RWPE1 (cell line): ENCODE measurements at regions of chr1 and their contacts with region 1.

Region 1: GRCh38 chr1:172719694-172720138 is 60.8 kb downstream of the FASLG start:
- DNase-seq: peak; percentile 42
- H3K27ac ChIP-seq: no peak overlapping the region
- CTCF ChIP-seq: peak; percentile 75

Region 2: DNA sequence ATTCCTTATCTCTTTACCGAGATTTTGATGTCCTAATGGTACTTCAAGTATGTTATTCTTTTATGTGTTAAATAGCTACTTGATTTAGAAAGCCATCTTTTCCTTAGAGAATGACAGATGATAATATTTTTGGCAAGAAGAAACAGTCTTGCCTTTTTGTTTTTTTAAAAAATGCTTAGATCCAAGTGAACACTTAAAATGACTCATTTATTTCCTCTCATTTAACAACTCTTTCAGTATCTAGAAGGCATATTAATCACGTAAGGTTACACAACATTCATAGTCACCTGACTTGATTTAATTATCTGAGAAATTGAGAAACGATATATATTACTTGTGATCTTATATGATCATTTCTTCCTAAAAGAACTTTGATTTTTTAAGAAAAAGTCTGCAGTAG is 134.4 kb before region 1 on chr1:
- CTCF ChIA-PET with region 1: interaction called, 17 read pairs
- POLR2A ChIA-PET with region 1: no interaction called
- DNase-seq: peak; percentile 40
- H3K27ac ChIP-seq: no peak overlapping the region
- CTCF ChIP-seq: no peak

Region 3: GRCh38 chr1:172609528-172609927 is 110.2 kb before region 1 on chr1:
- CTCF ChIA-PET with region 1: interaction called, 27 read pairs
- POLR2A ChIA-PET with region 1: no interaction called
- DNase-seq: peak; percentile 2
- H3K27ac ChIP-seq: no peak overlapping the region
- CTCF ChIP-seq: 0 out of 2 replicates have a peak, but pooled peaks have one; percentile 13